PC-9 (cell line): ENCODE measurements at regions of chr17 and their contacts with region 1.

Region 1: GRCh38 chr17:35849469-35850348 is 19.0 kb downstream of the HEATR9 start:
- DNase-seq: peak in 1 of 2 experiments; percentile 26
- H3K4me3 ChIP-seq: no peak overlapping the region
- H3K27ac ChIP-seq: no peak overlapping the region
- H3K4me1 ChIP-seq: no peaks in the 10 kb centered on the region
- H3K27me3 ChIP-seq: no peaks in the 10 kb centered on the region
- CTCF ChIP-seq: peak; percentile 90

Region 2: DNA sequence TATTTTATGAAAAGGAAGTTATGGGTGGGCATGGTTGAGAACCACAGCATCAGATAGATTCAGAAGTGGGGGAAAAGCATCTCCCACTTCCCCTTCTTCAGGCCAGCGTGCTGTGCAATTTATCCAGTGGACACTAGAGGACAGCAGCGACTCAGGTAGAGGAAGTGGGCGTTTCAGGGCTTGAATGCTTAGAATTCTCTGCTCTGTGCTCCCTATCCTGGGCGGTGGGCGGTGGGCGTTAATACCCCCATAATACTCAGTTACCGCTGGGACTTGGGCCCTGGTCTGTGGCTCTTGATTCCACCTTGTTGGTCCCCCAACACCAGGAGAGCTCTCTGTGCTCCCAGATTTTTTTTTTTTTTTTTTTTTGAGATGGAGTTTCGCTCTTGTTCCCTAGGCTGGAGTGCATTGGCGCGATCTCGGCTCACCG is 97.5 kb after region 1 on chr17:
- CTCF ChIA-PET with region 1: no interaction called
- POLR2A ChIA-PET with region 1: no interaction called
- intact Hi-C with region 1: loop called (anchors 10 kb)
- DNase-seq: peak in 1 of 2 experiments; percentile 47
- H3K4me3 ChIP-seq: no peak overlapping the region; the same call in 1 of the 2 replicates
- H3K27ac ChIP-seq: no peak overlapping the region
- H3K4me1 ChIP-seq: no peaks in the 10 kb centered on the region
- H3K27me3 ChIP-seq: peaks cover 28% of the 10 kb centered on the region
- CTCF ChIP-seq: peak; percentile 85